ENCODE measurements at regions of chr1 and their contacts with region 1.

Region 1: DNA sequence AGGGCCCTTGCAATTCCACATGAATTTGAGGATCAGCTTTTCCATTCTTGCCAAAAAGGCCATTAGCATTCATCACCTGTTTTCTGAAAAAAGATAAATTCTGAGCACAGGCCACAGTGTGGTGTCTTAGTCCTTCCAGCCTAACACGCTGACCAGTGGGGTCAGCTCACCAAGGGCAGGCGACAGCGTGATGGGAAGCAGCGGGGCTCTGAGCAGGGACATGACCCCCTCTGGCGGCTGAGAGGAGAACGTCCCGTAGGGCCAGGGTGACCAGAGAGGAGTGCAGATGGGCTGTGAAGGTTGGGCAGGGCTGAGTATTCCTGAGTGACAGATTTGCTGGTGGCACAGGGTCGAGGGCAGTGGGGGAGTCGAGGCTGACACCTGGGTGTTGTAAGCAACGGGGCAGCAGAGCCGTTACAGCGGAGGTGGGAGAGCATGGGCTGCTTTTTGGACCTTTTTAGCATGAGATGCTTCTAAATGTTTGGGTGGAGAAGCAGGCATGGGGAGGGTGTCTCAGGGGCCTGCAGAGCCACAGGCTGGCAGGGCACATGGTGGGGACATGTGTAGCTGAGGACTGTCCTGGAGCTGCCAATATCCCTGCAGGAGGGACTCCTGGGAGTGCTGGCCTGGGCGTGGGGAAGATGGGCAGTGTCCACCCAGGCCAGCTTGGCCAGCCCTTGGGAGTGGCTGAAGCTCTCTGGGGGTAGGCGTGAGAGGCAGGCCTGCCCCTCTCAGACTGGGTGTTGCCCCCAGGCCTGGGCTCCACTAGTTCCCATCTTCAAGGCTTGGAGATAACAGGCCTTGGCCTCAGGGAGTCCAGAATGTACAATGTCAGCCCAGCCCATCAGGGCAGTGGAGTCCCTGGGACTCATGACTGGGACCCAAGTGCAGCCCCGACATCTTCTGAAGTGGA is 8.6 kb upstream of the CALML6 start:
- DNase-seq: peak; percentile 46 to 84 (median 58)
- ATAC-seq: peak; percentile 19
- H3K4me3 ChIP-seq: no peak overlapping the region
- H3K4me3 Mint-ChIP-seq: peak overlapping the region; percentile 86
- H3K27ac ChIP-seq: no peak overlapping the region
- H3K27ac Mint-ChIP-seq: peak overlapping the region; percentile 65
- H3K4me1 ChIP-seq: peaks cover 30% of the 10 kb centered on the region
- H3K4me1 Mint-ChIP-seq: peaks cover 6% of the 10 kb centered on the region
- H3K27me3 ChIP-seq: no peaks in the 10 kb centered on the region
- H3K27me3 Mint-ChIP-seq: no peaks in the 10 kb centered on the region
- CTCF ChIP-seq: peak; percentile 84

Region 2: GRCh38 chr1:1567891-1568291 is 338.6 kb before region 1 on chr1:
- CTCF ChIA-PET with region 1: no interaction called
- POLR2A ChIA-PET with region 1: no interaction called
- intact Hi-C with region 1: no loop called
- DNase-seq: no peak
- ATAC-seq: no peak
- H3K4me3 ChIP-seq: no peak overlapping the region
- H3K4me3 Mint-ChIP-seq: no peak overlapping the region
- H3K27ac ChIP-seq: no peak overlapping the region
- H3K27ac Mint-ChIP-seq: peak overlapping the region; percentile 39
- H3K4me1 ChIP-seq: peaks cover 61% of the 10 kb centered on the region
- H3K4me1 Mint-ChIP-seq: peaks cover 47% of the 10 kb centered on the region
- H3K27me3 ChIP-seq: no peaks in the 10 kb centered on the region
- H3K27me3 Mint-ChIP-seq: no peaks in the 10 kb centered on the region
- CTCF ChIP-seq: no peak

Region 3: DNA sequence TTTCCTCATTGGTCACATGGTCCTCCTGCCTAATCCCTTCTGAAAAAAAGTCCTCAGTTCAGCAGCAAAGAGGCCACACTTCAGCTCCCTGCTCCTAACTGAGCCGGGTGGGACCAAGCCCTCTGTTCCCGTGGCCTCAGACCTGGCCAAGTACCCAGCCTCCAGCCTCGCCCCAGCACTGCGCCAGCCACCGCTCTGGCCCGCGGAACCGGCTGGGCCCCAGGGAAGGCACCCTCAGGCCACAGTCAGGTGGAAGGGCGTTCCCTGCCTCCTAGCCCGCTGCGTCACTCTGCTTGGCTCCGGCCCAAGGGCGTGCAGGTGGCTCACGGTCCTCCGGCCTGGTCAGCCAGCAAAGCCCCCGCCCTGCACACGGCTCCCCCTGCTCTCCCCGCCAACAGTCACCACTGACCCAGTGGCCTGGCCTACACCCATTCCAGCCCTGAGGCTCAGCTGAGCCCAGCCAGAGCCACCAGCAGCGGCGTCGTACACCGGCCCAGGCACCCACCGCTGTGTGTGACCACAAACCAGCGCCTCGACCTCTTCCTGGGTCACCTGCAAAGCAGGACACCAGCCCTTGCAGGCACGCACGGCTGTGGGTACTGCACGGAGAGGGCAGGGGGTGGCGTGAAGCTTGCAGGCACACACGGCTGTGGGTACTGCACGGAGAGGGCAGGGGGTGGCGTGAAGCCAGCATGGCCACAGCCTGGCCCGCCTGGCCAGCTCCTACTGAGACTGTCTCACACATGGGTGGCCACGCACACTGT is 147.6 kb before region 1 on chr1:
- CTCF ChIA-PET with region 1: no interaction called
- POLR2A ChIA-PET with region 1: no interaction called
- intact Hi-C with region 1: loop called in 1 of 2 experiments (anchors 5 kb)
- DNase-seq: no peak
- ATAC-seq: no peak
- H3K4me3 ChIP-seq: no peak overlapping the region
- H3K4me3 Mint-ChIP-seq: no peak overlapping the region
- H3K27ac ChIP-seq: no peak overlapping the region
- H3K27ac Mint-ChIP-seq: no peak overlapping the region
- H3K4me1 ChIP-seq: no peaks in the 10 kb centered on the region
- H3K4me1 Mint-ChIP-seq: no peaks in the 10 kb centered on the region
- H3K27me3 ChIP-seq: no peaks in the 10 kb centered on the region
- H3K27me3 Mint-ChIP-seq: no peaks in the 10 kb centered on the region
- CTCF ChIP-seq: no peak

Region 4: GRCh38 chr1:1777950-1778662 is 128.3 kb before region 1 on chr1 and contains the start of gene NADK:
- CTCF ChIA-PET with region 1: interaction called, 6 read pairs
- POLR2A ChIA-PET with region 1: interaction called, 23 read pairs
- intact Hi-C with region 1: loop called (anchors 2 to 5 kb)
- DNase-seq: peak; percentile 42 to 90 (median 68)
- ATAC-seq: peak; percentile 52
- H3K4me3 ChIP-seq: peak within 1 kb of the TSS; percentile 68
- H3K4me3 Mint-ChIP-seq: peak within 1 kb of the TSS; percentile 94
- H3K27ac ChIP-seq: peak within 1 kb of the TSS; percentile 82 to 95
- H3K27ac Mint-ChIP-seq: peak within 1 kb of the TSS; percentile 93
- H3K4me1 ChIP-seq: peaks cover 73% of the 10 kb centered on the region
- H3K4me1 Mint-ChIP-seq: peaks cover 62% of the 10 kb centered on the region
- H3K27me3 ChIP-seq: no peaks in the 10 kb centered on the region
- H3K27me3 Mint-ChIP-seq: no peaks in the 10 kb centered on the region
- CTCF ChIP-seq: no peak
- total RNA-seq, gene NADK: 19.9 to 25.1 TPM

Region 5: DNA sequence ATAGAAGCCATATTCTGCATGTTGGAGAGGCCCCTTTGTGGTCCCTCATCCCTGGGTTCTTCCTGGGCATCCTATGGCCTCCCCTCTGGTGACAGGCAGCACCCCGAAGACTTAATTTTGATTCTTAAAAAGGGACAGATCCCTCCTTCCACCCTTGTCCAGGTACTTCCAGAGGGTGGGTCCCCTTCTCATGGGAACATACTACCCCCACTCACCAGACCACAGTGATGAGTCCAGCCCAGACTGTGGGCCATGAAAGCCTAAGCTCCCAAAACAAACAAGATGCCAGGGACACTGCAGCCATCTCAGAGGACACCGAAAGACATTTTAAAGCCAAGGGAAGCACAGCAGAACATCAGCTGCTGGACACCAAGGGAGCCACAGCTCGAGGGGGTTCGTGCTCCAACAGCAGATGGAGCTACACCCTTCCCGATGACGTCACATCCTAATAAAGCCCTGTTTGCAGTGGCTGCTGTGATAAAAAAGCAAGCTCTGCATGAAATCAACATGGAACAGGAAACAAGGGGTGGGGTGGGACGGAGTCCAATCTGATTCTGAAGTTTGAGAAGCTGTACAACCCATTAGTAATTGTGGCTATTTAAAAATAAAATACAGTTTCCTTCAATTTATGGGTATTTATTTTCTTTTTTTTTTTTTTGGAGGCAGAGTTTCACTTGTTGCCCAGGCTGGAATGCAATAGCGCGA is 47.9 kb before region 1 on chr1:
- CTCF ChIA-PET with region 1: interaction called, 6 read pairs
- POLR2A ChIA-PET with region 1: no interaction called
- intact Hi-C with region 1: loop called in 1 of 2 experiments (anchors 1 kb)
- DNase-seq: peak in 10 of 14 experiments; percentile 9 to 76 (median 24)
- ATAC-seq: peak; percentile 72
- H3K4me3 ChIP-seq: no peak overlapping the region
- H3K4me3 Mint-ChIP-seq: peak overlapping the region; percentile 51
- H3K27ac ChIP-seq: peak overlapping the region; percentile 25 to 56
- H3K27ac Mint-ChIP-seq: peak overlapping the region; percentile 91
- H3K4me1 ChIP-seq: peaks cover 77% of the 10 kb centered on the region
- H3K4me1 Mint-ChIP-seq: peaks cover 88% of the 10 kb centered on the region
- H3K27me3 ChIP-seq: no peaks in the 10 kb centered on the region
- H3K27me3 Mint-ChIP-seq: no peaks in the 10 kb centered on the region
- CTCF ChIP-seq: peak; percentile 9

Region 6: GRCh38 chr1:1890506-1891348 is 15.7 kb before region 1 on chr1 and contains the start of gene GNB1:
- CTCF ChIA-PET with region 1: interaction called, 27 read pairs
- POLR2A ChIA-PET with region 1: interaction called, 12 read pairs
- intact Hi-C with region 1: loop called in 1 of 2 experiments (anchors 1 kb)
- DNase-seq: peak; percentile 73 to 97 (median 86)
- ATAC-seq: peak; percentile 67
- H3K4me3 ChIP-seq: peak within 1 kb of the TSS; percentile 77
- H3K4me3 Mint-ChIP-seq: peak within 1 kb of the TSS; percentile 92
- H3K27ac ChIP-seq: peak within 1 kb of the TSS; percentile 82 to 84
- H3K27ac Mint-ChIP-seq: peak within 1 kb of the TSS; percentile 98
- H3K4me1 ChIP-seq: peaks cover 77% of the 10 kb centered on the region
- H3K4me1 Mint-ChIP-seq: peaks cover 59% of the 10 kb centered on the region
- H3K27me3 ChIP-seq: no peaks in the 10 kb centered on the region
- H3K27me3 Mint-ChIP-seq: no peaks in the 10 kb centered on the region
- CTCF ChIP-seq: no peak
- total RNA-seq, gene GNB1: 138 to 149 TPM

Region 7: GRCh38 chr1:1919304-1920056 is 13.0 kb after region 1 on chr1:
- CTCF ChIA-PET with region 1: interaction called, 13 read pairs
- POLR2A ChIA-PET with region 1: interaction called, 6 read pairs
- intact Hi-C with region 1: loop called (anchors 1 kb)
- DNase-seq: peak; percentile 99 to 100 (median 100)
- ATAC-seq: peak; percentile 89
- H3K4me3 ChIP-seq: peak overlapping the region; percentile 50
- H3K4me3 Mint-ChIP-seq: peak overlapping the region; percentile 72
- H3K27ac ChIP-seq: peak overlapping the region; percentile 41 to 52
- H3K27ac Mint-ChIP-seq: peak overlapping the region; percentile 81
- H3K4me1 ChIP-seq: peaks cover 26% of the 10 kb centered on the region
- H3K4me1 Mint-ChIP-seq: peaks cover 4% of the 10 kb centered on the region
- H3K27me3 ChIP-seq: no peaks in the 10 kb centered on the region
- H3K27me3 Mint-ChIP-seq: no peaks in the 10 kb centered on the region
- CTCF ChIP-seq: no peak